ENCODE measurements at regions of chr3 and their contacts with region 1.

Region 1: DNA sequence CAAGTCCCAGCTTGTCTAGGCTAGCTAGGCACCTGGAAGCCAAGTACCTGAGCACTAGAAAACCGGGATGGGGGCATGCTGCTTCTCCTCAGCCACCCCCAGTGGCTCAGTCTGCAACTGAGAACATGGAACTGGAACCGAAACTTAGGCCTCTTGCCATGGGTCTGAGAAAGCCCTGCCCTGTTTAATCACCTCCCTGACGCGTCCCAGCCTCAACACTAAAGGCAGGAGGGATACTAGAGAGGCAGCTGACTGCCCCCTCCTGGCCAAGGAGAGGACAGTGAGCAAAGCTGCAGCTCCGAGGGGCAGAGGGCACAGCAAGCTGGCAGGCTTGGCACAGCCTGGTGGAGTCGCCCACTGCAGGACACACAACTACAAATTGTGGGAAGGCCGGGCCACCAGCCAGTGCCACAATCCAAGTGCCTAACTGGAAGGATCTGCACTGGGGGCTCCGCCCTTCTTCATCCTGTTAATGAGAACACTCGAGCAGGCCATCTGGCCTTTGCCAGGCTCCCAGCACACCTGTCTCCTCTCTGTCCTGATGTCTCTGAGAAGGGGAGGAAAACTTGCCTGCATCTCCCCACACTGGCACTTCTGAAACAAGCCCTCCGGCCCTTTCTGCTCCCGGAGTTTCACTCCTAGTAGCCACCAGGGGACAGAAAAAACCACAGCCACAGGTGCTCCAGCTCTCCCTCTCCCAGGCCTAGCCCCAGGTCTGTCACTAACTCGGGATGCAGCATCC is 53.7 kb downstream of the BDH1 start:
- DNase-seq: peak; percentile 84 to 87 (median 84)
- ATAC-seq: peak; percentile 81
- H3K4me3 ChIP-seq: no peak overlapping the region
- H3K4me1 ChIP-seq: peaks cover 46% of the 10 kb centered on the region
- CTCF ChIP-seq: peak; percentile 65

Region 2: DNA sequence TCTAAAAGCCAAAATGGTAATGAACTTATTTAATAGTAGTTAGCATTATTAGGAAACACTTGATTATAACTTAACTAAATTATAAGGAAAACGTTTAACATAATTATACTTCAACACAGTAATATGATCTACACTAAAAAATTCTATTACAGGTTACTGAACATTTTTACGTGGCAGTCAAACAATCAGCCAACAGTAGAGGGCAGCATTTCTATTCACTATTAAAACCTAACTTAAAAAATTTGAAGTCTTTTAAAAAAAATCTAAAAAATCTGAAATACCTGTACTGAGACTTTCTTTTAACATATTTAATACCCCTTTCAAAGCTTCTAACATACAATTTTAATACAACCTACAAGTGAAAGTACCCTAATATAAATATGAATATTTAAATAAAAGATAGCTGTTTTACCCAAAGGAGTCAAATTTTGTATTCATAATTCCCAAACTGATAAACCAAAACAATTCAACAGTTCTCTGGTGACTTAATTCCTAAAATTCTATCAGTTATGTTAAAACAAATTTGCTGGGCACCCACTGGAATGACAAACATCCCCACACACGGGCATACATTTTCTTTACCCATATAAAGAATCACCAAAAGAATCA is 245.1 kb before region 1 on chr3:
- intact Hi-C with region 1: loop called in 1 of 2 experiments (anchors 10 kb)
- DNase-seq: peak in 1 of 3 donors; percentile 81
- ATAC-seq: peak; percentile 51
- H3K4me3 ChIP-seq: no peak overlapping the region
- H3K4me1 ChIP-seq: peaks cover 5% of the 10 kb centered on the region
- CTCF ChIP-seq: peak; percentile 52

Region 3: DNA sequence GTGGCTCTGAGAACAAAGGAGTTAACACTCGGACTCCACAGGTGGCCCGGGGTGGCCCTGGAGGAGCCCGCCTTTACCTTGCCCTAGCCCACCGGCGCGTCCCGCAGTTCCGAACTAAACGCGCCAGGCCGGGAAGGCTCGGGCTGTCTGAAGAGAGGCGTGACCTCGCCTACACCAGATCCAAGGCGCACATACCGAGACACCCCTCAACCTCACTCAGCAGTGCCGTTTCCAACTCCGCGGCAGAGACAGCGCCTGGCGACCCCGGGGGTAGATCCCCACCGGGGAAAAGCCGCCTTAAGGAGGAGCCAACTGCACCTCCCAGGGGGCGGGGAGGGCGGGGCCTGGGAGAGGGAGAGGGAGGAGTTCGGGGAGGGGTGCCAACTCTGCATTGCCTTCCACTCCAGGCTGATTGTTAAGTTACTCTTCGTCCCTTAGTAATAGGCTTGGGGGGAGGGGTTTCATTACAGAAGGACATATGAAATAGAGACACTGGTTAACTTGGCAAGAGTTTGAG is 203.7 kb before region 1 on chr3 and contains the start of gene DLG1:
- intact Hi-C with region 1: loop called in 1 of 2 experiments (anchors 5 kb)
- DNase-seq: peak; percentile 95 to 97 (median 95)
- ATAC-seq: peak; percentile 87
- H3K4me3 ChIP-seq: peak within 1 kb of the TSS; percentile 87
- H3K4me1 ChIP-seq: peaks cover 21% of the 10 kb centered on the region
- CTCF ChIP-seq: no peak
- total RNA-seq, gene DLG1: 107 to 163 (median 134) TPM

Measured in mucosa of descending colon (tissue), 3 donors.